A549 (cell line): ENCODE measurements at regions of chr17 and their contacts with region 1.

Region 1: DNA sequence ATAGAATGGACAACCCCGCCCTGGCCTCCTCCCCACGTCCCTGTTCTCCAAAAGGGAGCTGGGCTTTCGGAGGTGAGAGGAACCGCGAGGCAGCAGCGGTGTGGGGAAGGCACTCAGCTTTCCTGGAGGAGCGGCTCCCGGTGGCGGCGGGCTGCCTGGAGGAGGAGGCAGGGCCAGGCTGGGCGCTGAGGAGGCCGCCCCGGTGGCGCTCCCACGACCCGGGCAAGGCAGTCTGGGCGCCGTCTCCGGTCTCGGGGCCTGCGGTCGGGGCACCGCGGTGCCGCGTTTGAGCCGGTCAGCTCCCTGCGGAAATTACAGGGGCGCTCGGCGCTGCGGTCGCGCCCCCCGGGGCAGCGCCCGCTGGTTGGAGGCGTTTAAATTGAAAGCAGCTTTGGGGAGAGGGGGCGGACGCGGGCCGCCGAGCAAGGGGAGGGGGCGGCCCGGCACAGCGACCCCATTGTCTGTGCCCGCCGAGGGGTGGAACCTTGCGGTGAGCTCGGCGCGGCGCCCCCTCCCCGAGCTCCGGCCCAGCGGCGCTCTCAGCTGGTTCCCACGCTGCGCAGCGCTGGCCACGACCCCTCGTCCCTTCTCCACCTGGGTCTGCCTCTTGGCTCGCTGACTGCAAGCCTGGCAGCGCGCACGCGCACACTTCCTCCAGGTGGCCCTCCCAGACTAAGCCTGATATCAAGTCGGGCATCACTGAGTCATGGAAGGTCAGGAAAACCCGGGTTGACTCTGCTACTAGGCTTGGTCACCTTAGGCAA is 58.7 kb upstream of the DLX4 start:
- DNase-seq: peak; percentile 39 to 55
- ATAC-seq: peak in 1 of 2 experiments; percentile 25; a peak in 2 of 6 replicates
- H3K4me3 ChIP-seq: peak overlapping the region; percentile 26; the same call in 2 of the 3 replicates
- H3K27ac ChIP-seq: peak overlapping the region in 1 of 2 experiments; percentile 63; a peak in 2 of 6 replicates
- H3K4me1 ChIP-seq: peaks cover 20% of the 10 kb centered on the region
- CTCF ChIP-seq: no peak
- EP300 ChIP-seq: no peak
- POLR2A ChIP-seq: no peak
- RAD21 ChIP-seq: no peak

Region 2: DNA sequence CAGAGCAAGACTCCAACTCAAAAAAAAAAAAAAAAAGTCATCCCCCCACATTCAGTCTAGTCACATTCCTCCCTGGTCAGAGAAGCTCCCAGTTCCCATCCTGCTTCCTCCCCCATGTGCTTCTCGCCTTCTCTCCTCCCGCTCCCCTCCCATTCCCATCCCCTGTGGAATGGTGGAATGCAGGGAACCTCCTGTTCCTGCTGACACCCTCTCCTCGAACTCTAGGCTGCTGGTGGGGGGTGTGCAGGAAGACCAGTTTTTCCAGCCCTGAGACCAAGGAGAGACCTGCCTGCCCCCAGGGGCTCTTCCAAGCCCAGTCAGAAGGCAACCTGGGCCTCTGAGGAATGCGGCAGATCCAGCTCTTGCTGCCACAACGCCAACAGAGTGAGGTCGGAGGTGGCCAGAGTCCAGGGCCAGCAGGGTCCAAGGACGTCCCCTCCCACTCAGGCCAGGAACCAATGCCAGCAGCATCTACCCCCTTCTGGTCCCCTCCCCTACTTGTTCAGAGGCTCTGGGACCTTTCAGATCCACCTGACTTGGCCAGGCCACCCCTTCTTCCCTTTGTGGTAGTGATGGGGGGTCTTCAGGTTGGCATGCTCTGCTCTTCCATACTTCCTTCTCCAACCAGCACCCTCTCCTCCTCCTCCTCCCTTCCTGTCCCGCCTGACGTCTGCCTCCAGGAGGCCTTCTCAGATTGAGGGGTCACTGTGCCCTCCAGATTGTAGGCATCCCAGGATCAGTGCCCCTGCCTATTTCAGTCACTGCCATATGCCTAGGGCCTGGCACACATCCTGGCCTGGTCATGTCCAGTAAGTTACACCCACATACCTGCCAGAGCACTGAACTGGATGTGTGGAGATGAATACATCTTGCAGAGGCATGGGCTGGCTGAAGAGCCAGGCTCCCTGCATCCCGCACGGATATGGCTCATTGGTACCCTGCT is 22.9 kb before region 1 on chr17:
- CTCF ChIA-PET with region 1: interaction called, 10 read pairs
- POLR2A ChIA-PET with region 1: no interaction called
- DNase-seq: no peak
- ATAC-seq: no peak
- H3K4me3 ChIP-seq: no peak overlapping the region
- H3K27ac ChIP-seq: no peak overlapping the region
- H3K4me1 ChIP-seq: no peaks in the 10 kb centered on the region
- CTCF ChIP-seq: no peak
- EP300 ChIP-seq: no peak
- POLR2A ChIP-seq: no peak
- RAD21 ChIP-seq: no peak